Right ventricle myocardium superior (tissue), 1 donor: ENCODE measurements at regions of chr7 and their contacts with region 1.

Region 1: GRCh38 chr7:131071786-131072504 is 255.7 kb upstream of the MKLN1 start:
- DNase-seq: peak; percentile 63
- ATAC-seq: peak; percentile 30

Region 2: DNA sequence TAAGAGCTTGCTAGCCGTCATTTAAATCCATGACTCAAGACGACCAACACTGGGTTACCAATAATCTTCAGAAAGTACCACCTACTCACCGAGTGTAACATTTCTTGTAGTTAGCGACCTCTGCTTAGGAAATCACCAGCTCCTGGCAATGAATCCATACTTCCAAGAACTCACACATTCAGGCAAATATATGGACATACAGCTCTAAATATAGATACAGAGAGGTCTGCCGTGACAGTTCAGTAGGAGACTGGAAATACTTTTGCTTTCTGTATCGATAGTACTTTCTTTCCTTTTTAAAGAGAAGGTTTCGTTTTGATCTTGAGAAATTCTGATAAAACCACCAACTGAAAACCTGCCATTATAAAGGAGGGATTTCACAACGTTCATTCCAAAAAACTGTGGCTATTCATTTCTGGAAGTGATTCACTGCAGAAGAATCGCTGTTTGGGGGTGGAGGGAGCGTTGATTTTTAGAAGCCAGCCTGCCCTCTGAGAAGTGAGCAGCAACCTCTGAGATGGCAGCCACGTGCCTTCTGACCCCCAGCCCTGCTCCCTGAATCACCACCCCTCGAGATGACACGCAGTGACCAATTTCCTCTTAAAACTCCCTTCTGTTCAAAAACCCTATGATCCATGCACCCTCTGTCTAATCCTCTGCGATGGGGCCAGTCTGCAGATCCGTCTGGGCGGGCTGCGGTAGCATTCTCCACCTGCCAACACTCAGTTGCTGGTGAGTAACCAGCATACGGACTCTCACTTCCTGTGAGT is 158.9 kb before region 1 on chr7:
- intact Hi-C with region 1: no loop called
- DNase-seq: peak; percentile 70
- ATAC-seq: peak; percentile 57

Region 3: GRCh38 chr7:131107337-131108211 is 35.6 kb after region 1 on chr7:
- intact Hi-C with region 1: loop called (anchors 5 kb)
- DNase-seq: peak; percentile 67
- ATAC-seq: peak; percentile 53

Region 4: GRCh38 chr7:131424219-131424822 is 352.4 kb after region 1 on chr7:
- intact Hi-C with region 1: loop called (anchors 10 kb)
- DNase-seq: no peak
- ATAC-seq: peak; percentile 64